ENCODE measurements at regions of chr9 and their contacts with region 1.

Region 1: DNA sequence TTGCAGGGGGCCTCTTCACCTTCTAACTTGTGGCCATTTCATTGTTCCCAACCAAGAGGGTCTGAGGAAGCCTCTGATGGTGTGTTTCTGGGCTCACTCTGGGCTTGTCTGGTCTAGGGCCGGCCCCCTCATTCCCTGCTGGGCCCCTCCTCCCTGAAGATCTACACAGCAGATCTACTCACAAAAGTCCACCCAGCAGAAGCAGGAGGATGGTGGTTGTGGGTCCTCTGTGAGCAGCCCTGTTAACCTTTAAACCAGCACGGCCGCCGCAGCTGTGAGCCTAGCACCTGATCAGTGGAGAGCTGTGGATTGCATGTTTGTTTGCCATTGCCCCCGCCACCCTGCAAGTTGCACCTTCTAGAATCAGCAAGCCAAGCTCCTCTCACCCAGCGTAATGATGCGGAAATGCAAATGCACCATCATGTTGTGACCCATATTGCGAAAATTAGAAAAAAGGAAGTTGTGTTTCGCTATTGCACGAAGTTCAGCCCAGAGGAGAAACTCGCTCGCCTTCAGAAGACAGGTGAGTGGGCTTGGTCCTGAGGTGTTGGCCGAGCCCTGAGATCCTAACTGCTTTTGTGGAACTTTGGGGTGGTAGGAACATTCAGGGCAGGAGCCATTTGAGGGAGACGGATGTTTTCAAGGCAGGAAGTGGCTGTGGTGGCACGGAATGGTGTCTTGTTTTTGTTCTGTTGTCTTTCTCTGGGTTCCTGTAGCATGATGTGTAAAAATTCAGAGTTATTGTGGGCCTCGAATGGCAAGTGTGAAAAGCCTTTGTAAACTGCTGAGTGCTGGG is 16.7 kb downstream of the FGD3 start:
- DNase-seq: peak; percentile 47 to 77
- H3K4me3 ChIP-seq: peak overlapping the region; percentile 49
- H3K4me3 Mint-ChIP-seq: peak overlapping the region; percentile 91
- H3K27ac Mint-ChIP-seq: peak overlapping the region; percentile 88
- H3K4me1 ChIP-seq: peaks cover 10% of the 10 kb centered on the region; the same call in 1 of the 2 replicates
- H3K4me1 Mint-ChIP-seq: peaks cover 5% of the 10 kb centered on the region
- H3K27me3 ChIP-seq: no peaks in the 10 kb centered on the region
- H3K27me3 Mint-ChIP-seq: no peaks in the 10 kb centered on the region
- CTCF ChIP-seq: no peak

Region 2: DNA sequence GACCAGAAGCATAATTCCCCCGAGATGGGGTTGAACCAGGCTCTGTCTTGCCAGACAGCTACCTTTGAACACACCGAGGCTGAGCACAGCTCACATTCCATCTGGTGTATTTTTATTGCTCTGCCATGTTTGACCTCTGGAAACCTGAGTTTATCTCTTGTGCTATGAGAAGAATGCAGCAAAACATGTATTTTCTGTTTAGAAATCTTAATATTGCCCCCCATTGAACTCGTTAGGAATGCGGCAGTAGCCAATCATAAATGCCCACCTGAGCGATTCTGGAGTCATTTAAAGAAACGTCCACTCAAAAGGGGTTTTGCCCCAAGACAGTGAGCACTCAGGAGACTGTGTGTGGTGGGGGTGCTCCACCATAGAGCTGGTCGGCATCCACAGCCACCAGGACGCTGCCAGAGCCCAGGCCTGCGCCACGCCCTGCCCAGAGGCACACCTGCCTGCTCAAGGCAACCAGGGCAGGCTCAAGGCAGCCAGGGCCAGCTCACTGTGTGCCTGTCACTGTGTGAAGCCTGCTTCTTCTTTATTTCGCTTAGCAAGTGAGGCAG is 10.2 kb after region 1 on chr9:
- CTCF ChIA-PET with region 1: no interaction called
- POLR2A ChIA-PET with region 1: interaction called, 3 read pairs
- intact Hi-C with region 1: loop called (anchors 1 kb)
- DNase-seq: peak; percentile 80 to 92
- H3K4me3 ChIP-seq: peak overlapping the region; percentile 22
- H3K4me3 Mint-ChIP-seq: peak overlapping the region; percentile 78
- H3K27ac Mint-ChIP-seq: peak overlapping the region; percentile 99
- H3K4me1 ChIP-seq: peaks cover 47% of the 10 kb centered on the region
- H3K4me1 Mint-ChIP-seq: peaks cover 7% of the 10 kb centered on the region
- H3K27me3 ChIP-seq: no peaks in the 10 kb centered on the region
- H3K27me3 Mint-ChIP-seq: no peaks in the 10 kb centered on the region
- CTCF ChIP-seq: no peak

Measured in Caco-2 (cell line).